ENCODE measurements at regions of chr4 and their contacts with region 1.

Region 1: GRCh38 chr4:1289207-1290164 is at the start of gene MAEA:
- DNase-seq: peak; percentile 98
- ATAC-seq: peak; percentile 97
- H3K4me3 Mint-ChIP-seq: peak within 1 kb of the TSS; percentile 93
- H3K27ac Mint-ChIP-seq: peak within 1 kb of the TSS; percentile 92
- H3K4me1 Mint-ChIP-seq: peaks cover 35% of the 10 kb centered on the region
- H3K27me3 Mint-ChIP-seq: no peaks in the 10 kb centered on the region
- total RNA-seq, gene MAEA: 60.3 to 65.1 TPM

Region 2: DNA sequence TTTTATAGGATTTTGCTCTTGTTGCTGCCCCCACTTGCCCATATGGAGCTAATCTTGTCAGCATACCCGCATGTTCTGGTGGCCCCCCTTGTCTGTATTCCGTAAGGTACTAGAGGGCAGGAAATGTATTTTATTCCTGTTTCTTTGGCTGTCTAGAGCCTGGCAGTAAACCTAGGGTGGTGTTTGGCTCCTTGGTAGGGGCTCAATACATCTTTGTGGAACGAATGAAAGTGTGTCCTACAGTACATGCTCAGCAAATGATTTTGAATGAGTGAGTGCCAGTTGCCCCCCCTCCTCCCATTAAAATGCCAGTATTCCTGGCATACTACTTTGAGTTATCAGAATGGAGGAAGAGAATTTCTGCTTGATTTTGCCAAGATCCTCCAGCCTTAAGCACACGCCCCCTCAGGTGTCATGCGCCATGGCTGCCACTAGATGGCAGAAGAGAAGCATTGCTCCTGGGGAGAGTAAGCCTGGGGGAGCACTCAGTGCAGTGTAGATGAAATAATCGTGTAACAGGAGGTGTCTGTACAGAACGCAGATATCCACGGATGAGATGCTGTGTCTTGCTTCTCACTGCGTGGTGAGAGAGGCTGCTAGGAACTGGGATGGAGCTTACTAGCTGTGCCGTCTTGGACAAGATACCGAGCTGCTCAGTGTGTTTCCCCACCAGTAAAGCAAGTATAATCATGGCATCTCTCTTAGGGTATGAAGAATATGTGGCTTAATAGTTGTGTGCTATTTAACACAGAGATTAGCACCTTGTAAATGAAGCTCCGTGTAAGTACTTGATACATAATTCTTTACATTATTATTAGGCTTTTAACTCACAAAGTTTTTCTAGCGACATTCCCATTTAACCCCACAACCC is 158.9 kb before region 1 on chr4:
- CTCF ChIA-PET with region 1: interaction called, 15 read pairs
- POLR2A ChIA-PET with region 1: no interaction called
- DNase-seq: peak; percentile 85
- ATAC-seq: peak; percentile 99
- H3K4me3 Mint-ChIP-seq: no peak overlapping the region
- H3K27ac Mint-ChIP-seq: no peak overlapping the region
- H3K4me1 Mint-ChIP-seq: peaks cover 2% of the 10 kb centered on the region
- H3K27me3 Mint-ChIP-seq: peaks cover 19% of the 10 kb centered on the region

Region 3: DNA sequence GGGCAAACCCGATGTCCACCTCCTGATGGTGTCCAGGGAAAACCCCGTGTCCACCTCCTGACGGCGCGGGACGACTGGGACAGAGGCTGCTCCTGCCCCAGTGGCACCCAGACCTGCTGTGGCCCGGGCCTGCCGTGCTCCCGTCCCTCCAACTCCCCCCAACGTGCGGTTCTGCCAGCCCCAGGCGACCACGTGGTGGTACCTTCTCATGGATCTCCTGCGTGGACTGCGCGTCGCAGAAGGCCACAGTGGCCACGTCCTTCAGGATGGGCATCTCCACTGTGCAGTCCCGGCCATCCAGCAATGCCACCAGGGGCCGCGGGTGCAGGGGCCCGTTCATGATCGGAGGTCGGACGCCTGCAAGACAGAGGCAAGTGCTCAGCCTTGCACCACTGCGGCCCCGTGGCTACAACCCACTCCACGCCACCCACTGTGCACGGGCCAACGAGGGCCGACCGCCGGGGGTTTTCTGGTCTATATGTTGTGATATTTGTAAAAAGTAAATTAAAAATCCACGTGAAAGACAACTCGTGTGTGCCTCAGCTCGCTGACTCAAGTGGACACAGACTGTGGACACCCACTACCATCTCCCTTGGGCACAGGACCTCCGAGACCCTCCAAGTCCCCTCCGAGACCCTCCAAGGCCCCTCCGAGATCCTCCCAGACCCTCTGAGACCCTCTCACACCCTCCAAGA is 51.4 kb before region 1 on chr4:
- CTCF ChIA-PET with region 1: no interaction called
- POLR2A ChIA-PET with region 1: no interaction called
- DNase-seq: no peak
- ATAC-seq: no peak
- H3K4me3 Mint-ChIP-seq: no peak overlapping the region
- H3K27ac Mint-ChIP-seq: no peak overlapping the region
- H3K4me1 Mint-ChIP-seq: peaks cover 8% of the 10 kb centered on the region
- H3K27me3 Mint-ChIP-seq: no peaks in the 10 kb centered on the region

Region 4: DNA sequence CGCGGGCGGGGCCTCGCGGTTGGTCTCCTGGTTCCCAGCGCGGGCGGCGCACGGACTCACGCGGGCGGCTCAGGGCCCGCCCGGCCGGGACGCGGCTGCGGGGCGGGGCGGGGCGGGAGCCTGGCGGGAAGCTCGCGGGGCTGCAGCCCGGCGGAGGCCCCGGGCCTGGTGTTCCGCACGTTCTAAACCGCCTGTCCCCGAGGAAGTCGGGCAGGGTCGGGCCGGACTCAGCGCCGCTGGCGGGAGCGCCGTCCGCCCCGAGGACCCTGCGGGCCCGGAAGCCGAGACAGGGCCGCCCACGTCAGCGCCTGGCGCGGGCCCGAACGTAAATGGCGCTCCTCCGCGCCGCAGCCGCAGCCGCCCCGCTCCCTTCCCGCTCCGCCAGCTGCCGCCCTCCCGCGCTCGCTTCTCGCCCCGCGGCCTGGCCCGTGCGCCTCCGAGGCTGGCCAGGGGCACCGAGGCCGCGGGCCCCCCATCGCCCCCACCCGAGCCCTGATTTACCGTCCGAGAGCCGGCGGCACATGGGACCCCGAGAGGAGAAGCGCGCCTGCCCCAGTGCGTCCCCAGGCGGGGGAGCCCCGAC is 40.2 kb before region 1 on chr4:
- CTCF ChIA-PET with region 1: interaction called, 5 read pairs
- POLR2A ChIA-PET with region 1: interaction called, 41 read pairs
- DNase-seq: peak; percentile 83
- ATAC-seq: peak; percentile 64
- H3K4me3 Mint-ChIP-seq: peak overlapping the region; percentile 86
- H3K27ac Mint-ChIP-seq: peak overlapping the region; percentile 95
- H3K4me1 Mint-ChIP-seq: peaks cover 66% of the 10 kb centered on the region
- H3K27me3 Mint-ChIP-seq: no peaks in the 10 kb centered on the region

Region 5: DNA sequence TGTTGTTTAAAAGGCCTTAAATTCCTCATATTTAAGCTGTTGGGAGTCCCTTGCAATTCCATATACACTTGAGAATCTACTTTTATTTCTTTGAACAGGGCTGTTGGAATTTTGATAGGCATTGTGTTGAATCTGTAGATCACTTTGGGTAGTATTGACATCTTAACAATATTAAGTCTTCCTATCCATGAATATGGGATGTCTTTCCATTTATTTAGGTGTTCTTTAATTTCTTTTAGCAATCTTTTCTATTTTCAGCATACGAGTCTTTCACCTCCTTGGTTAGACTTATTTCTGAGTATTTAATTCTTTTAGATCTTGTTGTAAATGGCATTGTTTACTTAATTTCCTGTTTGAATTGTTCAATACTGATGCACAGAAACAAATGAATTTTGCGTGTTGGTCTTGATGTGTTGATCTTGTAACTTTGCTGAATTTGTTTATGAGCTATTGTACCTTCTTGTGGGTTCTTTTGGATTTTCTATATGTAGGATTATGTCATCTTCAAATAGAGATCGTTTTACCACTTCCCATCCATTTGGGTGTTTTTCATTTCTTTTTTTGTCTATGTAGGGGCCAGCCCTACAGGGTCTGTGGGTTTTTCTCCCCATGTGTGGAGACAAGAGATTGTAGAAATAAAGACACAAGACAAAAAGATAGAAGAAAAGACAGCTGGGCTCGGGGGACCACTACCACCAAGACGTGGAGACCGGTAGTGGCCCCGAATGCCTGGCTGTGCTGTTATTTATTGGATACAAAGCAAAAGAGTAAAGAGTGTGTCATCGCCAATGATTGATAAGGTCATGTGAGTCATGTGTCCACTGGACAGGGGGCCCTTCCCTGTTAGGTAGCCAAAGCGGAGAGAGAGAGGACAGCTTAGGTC is 22.4 kb before region 1 on chr4:
- CTCF ChIA-PET with region 1: interaction called, 29 read pairs
- POLR2A ChIA-PET with region 1: interaction called, 33 read pairs
- DNase-seq: no peak
- ATAC-seq: peak; percentile 79
- H3K4me3 Mint-ChIP-seq: peak overlapping the region; percentile 70
- H3K27ac Mint-ChIP-seq: peak overlapping the region; percentile 95
- H3K4me1 Mint-ChIP-seq: peaks cover 20% of the 10 kb centered on the region
- H3K27me3 Mint-ChIP-seq: no peaks in the 10 kb centered on the region

Region 6: DNA sequence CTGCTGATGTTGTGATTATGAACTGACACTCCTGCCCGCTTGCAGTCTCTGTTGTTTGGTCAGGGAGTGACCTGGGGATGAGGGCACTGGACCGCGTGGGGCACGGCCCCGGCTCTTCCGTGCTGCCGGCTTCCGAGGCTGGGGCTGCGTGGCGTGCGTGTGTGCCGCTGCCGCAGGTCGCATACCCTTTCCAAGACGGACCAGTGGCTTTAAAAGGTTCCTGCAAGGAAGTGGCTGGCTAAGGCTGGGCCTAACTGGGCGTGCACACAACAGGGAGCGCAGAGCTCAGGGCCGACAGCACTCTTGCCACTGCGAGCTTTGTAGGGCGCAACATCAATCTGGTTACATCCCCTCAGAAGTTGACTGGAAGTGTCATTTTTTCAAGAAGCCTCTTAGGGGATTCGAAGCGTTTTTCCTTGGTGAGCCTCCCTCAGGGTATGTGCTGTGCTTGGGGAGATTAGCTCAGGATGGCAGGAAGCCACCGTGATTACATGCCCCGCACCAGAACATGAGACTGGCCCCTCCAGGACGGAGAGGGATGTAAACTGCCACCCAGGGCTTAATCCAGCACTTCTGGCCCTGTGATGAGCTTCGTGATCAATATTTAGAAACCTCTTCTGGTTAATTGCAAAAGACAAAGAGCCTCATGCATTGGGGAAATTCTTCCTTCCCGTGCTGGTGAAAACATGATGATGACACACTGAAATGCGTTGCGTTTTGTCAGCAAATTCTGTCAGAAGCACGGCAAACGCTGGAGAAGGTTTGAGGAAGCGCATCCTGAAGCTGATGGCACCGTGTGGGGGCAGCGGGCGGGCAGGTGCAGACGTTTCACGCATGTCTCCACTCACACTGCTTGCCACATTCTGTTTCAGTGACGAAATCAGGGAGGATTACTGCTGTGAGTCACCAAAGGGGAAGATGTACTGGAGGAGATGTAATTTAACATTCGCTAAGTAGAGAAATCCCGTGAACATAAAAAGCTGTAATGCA is 11.3 kb after region 1 on chr4:
- CTCF ChIA-PET with region 1: interaction called, 3 read pairs
- POLR2A ChIA-PET with region 1: interaction called, 11 read pairs
- DNase-seq: no peak
- ATAC-seq: no peak
- H3K4me3 Mint-ChIP-seq: no peak overlapping the region
- H3K27ac Mint-ChIP-seq: no peak overlapping the region
- H3K4me1 Mint-ChIP-seq: peaks cover 25% of the 10 kb centered on the region
- H3K27me3 Mint-ChIP-seq: no peaks in the 10 kb centered on the region

Region 7: GRCh38 chr4:1309261-1310010 is 19.9 kb after region 1 on chr4:
- CTCF ChIA-PET with region 1: interaction called, 5 read pairs
- POLR2A ChIA-PET with region 1: interaction called, 15 read pairs
- DNase-seq: peak; percentile 77
- ATAC-seq: peak; percentile 87
- H3K4me3 Mint-ChIP-seq: peak overlapping the region; percentile 47
- H3K27ac Mint-ChIP-seq: peak overlapping the region; percentile 75
- H3K4me1 Mint-ChIP-seq: peaks cover 63% of the 10 kb centered on the region
- H3K27me3 Mint-ChIP-seq: no peaks in the 10 kb centered on the region

Region 8: GRCh38 chr4:1351854-1352633 is 62.6 kb after region 1 on chr4:
- CTCF ChIA-PET with region 1: interaction called, 32 read pairs
- POLR2A ChIA-PET with region 1: interaction called, 37 read pairs
- DNase-seq: peak; percentile 93
- ATAC-seq: peak; percentile 48
- H3K4me3 Mint-ChIP-seq: no peak overlapping the region
- H3K27ac Mint-ChIP-seq: peak overlapping the region; percentile 58
- H3K4me1 Mint-ChIP-seq: peaks cover 28% of the 10 kb centered on the region
- H3K27me3 Mint-ChIP-seq: no peaks in the 10 kb centered on the region

Measured in activated CD8-positive, alpha-beta T cell treated with anti-CD3 and anti-CD28 coated beads, Interleukin-2, amount 10 ng/mL, durations not matched to agents 7 days and 5 days (primary cell).